ENCODE measurements at regions of chr5 and their contacts with region 1.

Region 1: DNA sequence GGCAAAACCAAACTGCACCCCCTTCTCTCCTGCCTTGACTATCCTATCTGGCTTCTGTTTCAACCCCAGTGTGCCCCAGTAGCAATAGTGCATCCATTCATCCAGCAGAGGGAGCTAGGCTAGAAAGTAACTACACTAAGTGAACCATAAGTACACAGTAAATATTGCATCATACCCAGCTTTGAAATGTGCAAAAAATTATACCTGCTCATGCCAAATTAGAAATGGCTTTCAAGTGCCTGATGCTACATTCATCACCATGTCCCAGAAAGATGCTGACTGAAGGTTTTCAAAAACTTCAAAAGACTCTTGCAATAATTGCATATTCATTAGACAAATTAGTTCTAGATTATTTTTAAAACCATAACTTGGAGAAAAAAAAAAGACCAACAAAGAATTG is 153.5 kb downstream of the PRELID2 start:
- DNase-seq: no peak
- H3K4me3 ChIP-seq: no peak overlapping the region
- CTCF ChIP-seq: peak; percentile 75

Region 2: DNA sequence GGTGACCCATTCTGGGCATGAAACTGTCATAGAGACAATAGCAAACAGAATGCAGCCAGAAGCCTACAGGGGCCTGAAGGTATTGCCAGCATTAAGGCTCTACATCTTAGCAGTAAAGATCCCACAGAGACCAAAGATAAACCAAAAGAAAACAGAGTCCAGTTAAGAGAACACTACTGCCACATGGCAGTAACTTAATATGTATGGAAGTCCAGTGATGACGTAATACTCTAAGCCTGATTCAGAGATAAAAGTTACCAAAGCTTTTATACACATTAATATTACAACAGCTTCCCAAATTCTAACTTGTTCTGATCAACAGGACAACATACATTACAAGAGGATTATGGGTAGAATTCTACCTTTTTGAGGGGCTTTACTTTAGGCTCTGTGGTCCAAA is 218.1 kb before region 1 on chr5:
- CTCF ChIA-PET with region 1: no interaction called
- POLR2A ChIA-PET with region 1: no interaction called
- DNase-seq: no peak
- H3K4me3 ChIP-seq: no peak overlapping the region
- CTCF ChIP-seq: no peak

Region 3: GRCh38 chr5:145668714-145669113 is 13.0 kb before region 1 on chr5:
- CTCF ChIA-PET with region 1: interaction called, 22 read pairs
- POLR2A ChIA-PET with region 1: no interaction called
- DNase-seq: no peak
- H3K4me3 ChIP-seq: no peak overlapping the region
- CTCF ChIP-seq: no peak

Region 4: DNA sequence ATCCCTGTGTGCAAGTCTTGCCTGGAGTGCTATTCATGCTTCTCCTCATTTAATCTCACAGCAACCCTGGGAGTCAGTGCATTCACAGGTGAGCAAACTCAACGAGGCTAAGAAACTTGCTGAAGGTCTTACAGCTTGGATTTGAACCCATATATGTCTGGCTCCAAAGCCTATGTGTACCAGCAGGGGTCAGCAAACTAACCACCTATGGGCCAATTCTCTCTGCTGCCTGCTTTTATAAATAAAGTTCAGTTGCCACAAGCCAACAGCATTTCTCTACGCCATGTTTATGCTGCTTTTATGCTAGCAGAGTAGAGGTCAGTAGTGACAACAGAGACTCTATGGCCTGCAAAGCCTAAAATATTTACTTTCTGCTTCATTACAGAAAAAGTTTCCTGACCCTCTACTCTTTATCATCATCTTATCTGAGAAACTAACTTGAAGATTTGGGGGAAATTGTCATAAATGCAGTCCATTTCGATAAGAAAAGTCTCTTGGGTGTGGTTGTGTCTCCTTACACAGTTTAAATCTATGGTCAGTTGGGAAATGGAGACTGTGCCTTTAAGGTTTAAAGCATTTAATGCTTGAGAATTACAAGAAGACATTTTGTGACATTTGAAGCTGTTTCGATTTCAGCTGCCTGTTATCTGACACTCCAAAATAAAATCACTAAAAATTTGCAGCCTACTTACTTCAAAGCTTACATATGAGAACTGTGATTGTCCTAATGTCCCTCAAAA is 15.7 kb after region 1 on chr5:
- CTCF ChIA-PET with region 1: interaction called, 12 read pairs
- POLR2A ChIA-PET with region 1: no interaction called
- DNase-seq: no peak
- H3K4me3 ChIP-seq: no peak overlapping the region
- CTCF ChIP-seq: peak; percentile 53

Region 5: DNA sequence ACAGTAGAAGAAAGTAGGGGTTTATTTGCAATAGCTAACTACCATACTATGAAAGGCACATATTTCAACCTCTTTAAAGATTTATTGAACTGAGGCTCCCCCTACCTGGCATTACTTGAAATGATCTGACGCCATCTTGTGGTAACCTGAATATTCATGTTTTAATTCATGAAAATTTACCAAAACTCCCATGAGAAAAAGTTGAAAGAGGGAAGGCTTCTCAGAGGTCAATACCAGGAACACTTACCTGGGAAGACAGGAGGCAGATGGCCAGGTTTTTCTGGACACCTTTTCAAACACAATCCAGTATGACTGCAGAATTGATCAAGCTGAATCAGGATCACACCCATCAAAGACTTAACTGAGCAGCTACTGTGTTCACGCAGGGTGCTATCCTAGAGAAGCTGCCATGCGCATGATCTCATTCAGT is 144.1 kb after region 1 on chr5:
- CTCF ChIA-PET with region 1: interaction called, 19 read pairs
- POLR2A ChIA-PET with region 1: no interaction called
- DNase-seq: no peak
- H3K4me3 ChIP-seq: no peak overlapping the region
- CTCF ChIP-seq: peak; percentile 67